ENCODE measurements at regions of chr16 and their contacts with region 1.

Region 1: DNA sequence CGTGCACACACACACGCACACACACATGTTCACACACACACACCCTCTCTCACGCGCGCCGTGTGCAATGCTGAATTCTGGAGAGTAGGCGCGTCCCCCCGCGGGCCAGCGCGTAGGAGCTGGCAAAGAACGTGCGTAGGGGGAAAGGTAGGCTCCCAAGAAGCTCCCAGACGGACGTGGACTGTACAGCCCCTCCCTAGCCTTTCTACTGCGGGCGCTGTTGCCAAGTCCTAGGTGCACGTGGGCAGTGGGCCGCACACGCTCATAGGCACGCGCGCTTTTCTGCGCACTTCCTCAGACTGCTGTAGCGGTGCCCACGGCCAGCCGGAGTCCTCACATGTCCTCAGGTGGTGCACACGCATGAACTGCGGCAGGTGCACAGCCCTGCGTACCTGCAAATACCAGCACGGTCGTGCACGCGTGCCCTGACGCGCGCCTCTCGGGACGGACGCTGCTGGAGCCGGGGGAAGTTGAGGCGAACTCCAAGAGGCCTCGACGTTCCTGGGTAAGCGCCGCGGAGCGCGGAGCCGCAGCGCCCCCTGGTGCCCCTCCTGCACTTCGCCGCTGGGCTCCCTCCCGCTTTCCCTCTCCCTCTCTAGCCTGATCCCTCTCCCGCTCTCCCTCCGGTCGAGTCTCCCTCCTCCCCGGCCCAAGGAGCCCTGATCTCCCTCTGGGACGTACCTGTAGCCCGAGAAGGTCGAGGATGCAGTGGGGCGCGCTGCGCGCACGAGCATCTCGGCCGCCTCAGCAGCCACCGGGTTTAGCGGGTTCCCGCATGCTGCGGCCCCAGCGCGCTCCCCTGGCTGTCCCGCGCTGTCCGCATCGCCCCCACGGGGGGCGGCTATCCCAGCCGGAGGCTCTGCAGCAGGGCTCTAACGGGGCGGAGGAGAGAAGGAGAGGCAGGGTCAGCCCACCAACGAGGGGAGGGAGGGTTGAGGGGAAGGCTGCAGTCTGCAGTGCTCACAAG is 749 bp downstream of the GRIN2A start:
- DNase-seq: no peak
- ATAC-seq: peak; percentile 83
- H3K4me3 ChIP-seq: peak overlapping the region; percentile 55; the same call in 1 of the 2 replicates
- H3K27ac ChIP-seq: no peak overlapping the region
- H3K4me1 ChIP-seq: peaks cover 3% of the 10 kb centered on the region; the same call in 1 of the 2 replicates
- H3K27me3 ChIP-seq: peaks cover 3 to 6% of the 10 kb centered on the region in 2 experiments; a peak in 3 of 4 replicates
- CTCF ChIP-seq: peak; percentile 76 to 97 (median 91)
- EP300 ChIP-seq: no peak
- POLR2A ChIP-seq: no peak
- RAD21 ChIP-seq: peak; percentile 82

Region 2: GRCh38 chr16:8572919-8573724 is 1608.4 kb before region 1 on chr16:
- CTCF ChIA-PET with region 1: no interaction called
- POLR2A ChIA-PET with region 1: no interaction called
- RAD21 ChIA-PET with region 1: no interaction called
- SMC1A ChIA-PET with region 1: no interaction called
- in situ Hi-C with region 1: loop called (anchors 10 kb)
- intact Hi-C with region 1: no loop called
- DNase-seq: no peak
- ATAC-seq: peak; percentile 56
- H3K4me3 ChIP-seq: no peak overlapping the region
- H3K27ac ChIP-seq: no peak overlapping the region
- H3K4me1 ChIP-seq: no peaks in the 10 kb centered on the region
- H3K27me3 ChIP-seq: no peaks in the 10 kb centered on the region; a peak in 2 of 4 replicates
- CTCF ChIP-seq: peak; percentile 39 to 64 (median 54); a peak in 5 of 6 replicates
- EP300 ChIP-seq: no peak
- POLR2A ChIP-seq: no peak
- RAD21 ChIP-seq: peak; percentile 86

Region 3: DNA sequence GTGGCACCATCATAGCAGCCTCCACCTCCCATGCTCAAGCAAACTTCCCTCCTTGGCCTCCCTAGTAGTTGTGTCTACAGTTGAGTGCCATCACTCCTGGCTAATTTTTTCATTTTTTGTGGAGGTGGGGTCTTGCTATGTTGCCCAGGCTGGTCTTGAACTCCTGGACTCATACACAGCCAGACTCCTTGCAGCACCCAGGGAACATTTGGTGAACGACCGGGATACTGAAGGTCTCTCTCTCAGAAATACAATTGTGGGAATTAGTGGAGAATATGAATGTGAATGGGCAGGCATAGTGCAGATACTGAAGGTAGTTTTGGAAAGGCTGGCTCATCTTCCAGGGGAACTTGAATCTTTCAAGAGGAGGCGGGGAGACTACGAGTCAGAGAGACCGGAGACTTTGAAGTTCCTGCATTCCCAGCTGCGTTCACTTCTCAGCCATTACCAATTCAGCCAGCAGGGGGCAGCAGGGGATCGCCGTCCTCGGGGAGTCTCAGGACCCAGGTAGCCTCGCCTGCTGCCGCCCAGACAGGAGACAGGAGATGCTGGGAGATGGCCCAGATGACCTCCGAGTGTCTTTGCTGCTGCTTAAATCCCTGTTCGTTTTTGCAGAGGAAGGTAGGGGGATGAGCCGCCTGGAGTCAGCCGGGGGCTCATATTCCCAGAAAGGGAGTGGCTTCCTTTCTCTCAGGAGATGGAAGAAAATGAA is 1021.5 kb before region 1 on chr16:
- CTCF ChIA-PET with region 1: no interaction called
- POLR2A ChIA-PET with region 1: no interaction called
- RAD21 ChIA-PET with region 1: no interaction called
- SMC1A ChIA-PET with region 1: no interaction called
- in situ Hi-C with region 1: no loop called
- intact Hi-C with region 1: loop called (anchors 1 kb)
- DNase-seq: peak; percentile 4
- ATAC-seq: peak; percentile 91
- H3K4me3 ChIP-seq: no peak overlapping the region
- H3K27ac ChIP-seq: no peak overlapping the region
- H3K4me1 ChIP-seq: no peaks in the 10 kb centered on the region
- H3K27me3 ChIP-seq: no peaks in the 10 kb centered on the region; a peak in 1 of 4 replicates
- CTCF ChIP-seq: peak; percentile 73 to 81 (median 79)
- EP300 ChIP-seq: no peak
- POLR2A ChIP-seq: no peak
- RAD21 ChIP-seq: peak; percentile 80

Region 4: DNA sequence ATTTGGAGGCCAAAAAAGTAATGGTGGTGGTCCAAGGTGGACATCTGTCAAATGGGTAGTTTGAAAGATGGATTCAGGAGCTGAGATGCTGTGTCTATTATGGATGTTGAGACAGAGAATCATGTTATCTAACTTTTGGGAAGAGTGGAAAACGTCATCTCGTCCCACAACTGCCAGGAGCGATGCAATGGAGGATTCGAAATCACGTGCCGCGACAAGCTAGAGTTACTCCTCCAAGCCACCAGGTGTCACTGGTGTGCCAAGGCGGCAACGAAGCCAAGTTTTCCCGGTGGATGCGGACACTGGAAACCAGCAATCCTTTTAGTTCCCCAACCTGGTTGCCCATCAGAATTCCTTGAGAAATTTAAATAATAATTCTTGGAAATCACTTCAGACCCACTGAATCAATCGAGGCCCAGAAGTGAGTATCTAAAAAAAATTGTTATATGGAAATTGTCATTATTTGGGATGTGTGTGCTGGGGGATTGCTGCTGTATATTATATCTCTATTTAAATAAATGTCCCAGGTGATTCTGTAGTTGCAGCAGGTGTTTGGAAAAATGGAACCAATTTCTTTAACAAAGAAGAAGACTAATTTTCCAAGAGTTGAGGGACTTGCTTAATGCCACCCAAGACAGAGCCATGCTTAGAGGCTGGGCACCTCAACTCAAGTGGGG is 883.9 kb before region 1 on chr16:
- CTCF ChIA-PET with region 1: interaction called, 10 read pairs
- POLR2A ChIA-PET with region 1: no interaction called
- RAD21 ChIA-PET with region 1: interaction called, 3 read pairs
- SMC1A ChIA-PET with region 1: no interaction called
- in situ Hi-C with region 1: no loop called
- intact Hi-C with region 1: loop called (anchors 2 kb)
- DNase-seq: no peak
- ATAC-seq: no peak
- H3K4me3 ChIP-seq: no peak overlapping the region
- H3K27ac ChIP-seq: no peak overlapping the region
- H3K4me1 ChIP-seq: no peaks in the 10 kb centered on the region
- H3K27me3 ChIP-seq: no peaks in the 10 kb centered on the region
- CTCF ChIP-seq: peak; percentile 40 to 57 (median 42); a peak in 4 of 6 replicates
- EP300 ChIP-seq: no peak
- POLR2A ChIP-seq: no peak
- RAD21 ChIP-seq: peak; percentile 57

Region 5: DNA sequence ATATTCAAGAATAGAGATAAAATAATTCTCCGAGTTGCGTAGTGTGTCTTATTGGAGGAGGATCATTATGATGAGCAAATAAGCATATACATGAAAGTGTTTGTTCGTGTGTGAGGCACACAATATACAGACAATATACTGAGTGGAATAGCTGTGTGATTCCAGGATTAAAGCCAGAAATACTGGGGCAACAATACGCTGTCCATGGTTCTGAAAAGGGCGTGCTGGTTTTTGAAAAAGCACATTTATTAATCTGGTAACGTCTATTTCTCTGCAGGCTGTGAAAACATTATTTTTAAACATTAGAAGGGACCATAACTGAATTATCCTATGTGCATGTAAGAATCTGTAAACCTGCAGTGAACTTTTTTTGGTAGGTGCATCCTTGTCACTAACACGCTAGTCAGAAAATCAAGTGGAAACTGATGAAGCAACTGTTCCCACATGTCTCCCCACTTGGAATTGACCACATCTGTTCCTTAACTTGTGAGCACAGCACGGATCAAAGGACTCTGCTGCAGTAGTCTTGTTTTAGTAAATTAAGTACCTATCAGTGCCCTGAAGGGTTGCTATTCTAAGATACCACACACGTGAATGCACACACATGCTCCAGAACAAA is 345.3 kb before region 1 on chr16:
- CTCF ChIA-PET with region 1: no interaction called
- POLR2A ChIA-PET with region 1: no interaction called
- RAD21 ChIA-PET with region 1: interaction called, 3 read pairs
- SMC1A ChIA-PET with region 1: no interaction called
- in situ Hi-C with region 1: no loop called
- intact Hi-C with region 1: loop called (anchors 5 kb)
- DNase-seq: no peak
- ATAC-seq: no peak
- H3K4me3 ChIP-seq: no peak overlapping the region
- H3K27ac ChIP-seq: no peak overlapping the region
- H3K4me1 ChIP-seq: peaks cover 4% of the 10 kb centered on the region; the same call in 1 of the 2 replicates
- H3K27me3 ChIP-seq: no peaks in the 10 kb centered on the region
- CTCF ChIP-seq: no peak
- EP300 ChIP-seq: no peak
- POLR2A ChIP-seq: no peak
- RAD21 ChIP-seq: no peak

Region 6: DNA sequence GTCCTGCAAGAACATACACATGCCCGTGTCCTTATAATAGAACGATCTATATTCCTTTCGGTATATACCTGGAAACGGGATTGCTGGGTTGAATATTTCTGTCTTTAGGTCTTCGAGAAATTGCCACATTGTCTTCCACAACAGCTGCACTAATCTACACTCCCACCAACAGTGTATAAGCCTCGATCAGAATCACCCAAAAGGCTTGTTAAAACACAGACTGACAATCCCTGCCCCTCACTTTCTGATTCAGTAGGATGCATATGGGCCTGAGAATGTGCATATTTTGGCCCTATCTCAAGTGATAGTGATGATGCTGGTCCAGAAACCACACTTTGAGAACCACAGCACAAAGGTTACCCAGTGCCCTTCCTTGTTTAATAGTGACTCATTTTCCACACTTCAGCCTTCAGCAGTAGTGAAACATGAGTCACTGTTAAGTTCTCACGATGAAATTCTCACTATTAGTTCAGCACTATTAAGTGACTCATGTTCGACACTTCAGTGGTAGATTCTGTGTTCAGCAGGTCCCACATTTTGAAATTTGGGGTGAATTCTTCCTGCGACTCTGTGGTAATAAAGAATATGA is 214.8 kb before region 1 on chr16:
- CTCF ChIA-PET with region 1: interaction called, 28 read pairs
- POLR2A ChIA-PET with region 1: no interaction called
- RAD21 ChIA-PET with region 1: interaction called, 9 read pairs
- SMC1A ChIA-PET with region 1: interaction called, 20 read pairs
- in situ Hi-C with region 1: no loop called
- intact Hi-C with region 1: loop called (anchors 5 kb)
- DNase-seq: peak; percentile 86
- ATAC-seq: peak; percentile 92
- H3K4me3 ChIP-seq: no peak overlapping the region
- H3K27ac ChIP-seq: no peak overlapping the region
- H3K4me1 ChIP-seq: peaks cover 3% of the 10 kb centered on the region
- H3K27me3 ChIP-seq: no peaks in the 10 kb centered on the region
- CTCF ChIP-seq: no peak
- EP300 ChIP-seq: peak; percentile 73 to 81; a peak in 2 of 4 replicates
- POLR2A ChIP-seq: no peak
- RAD21 ChIP-seq: no peak

Region 7: DNA sequence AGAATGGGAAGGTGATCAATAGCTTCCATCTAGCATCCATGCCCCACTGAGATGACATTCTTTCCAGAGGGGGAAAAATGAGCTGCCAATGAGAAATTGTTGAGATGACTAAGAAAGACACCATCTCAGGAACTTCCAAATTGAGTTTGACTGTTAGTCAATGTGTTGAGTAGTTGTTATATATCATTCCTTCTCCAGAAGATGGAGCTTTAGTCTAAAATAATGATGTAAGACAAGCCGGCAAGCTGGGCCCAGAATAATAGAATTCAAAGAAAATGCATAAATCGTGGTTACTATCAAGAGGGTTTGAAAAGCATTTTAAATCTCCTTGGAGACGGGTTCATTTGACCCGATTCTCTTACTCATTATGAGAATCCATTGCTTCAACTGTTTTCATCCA is 133.3 kb after region 1 on chr16:
- CTCF ChIA-PET with region 1: no interaction called
- POLR2A ChIA-PET with region 1: no interaction called
- RAD21 ChIA-PET with region 1: interaction called, 4 read pairs
- SMC1A ChIA-PET with region 1: interaction called, 11 read pairs
- in situ Hi-C with region 1: no loop called
- intact Hi-C with region 1: no loop called
- DNase-seq: no peak
- ATAC-seq: peak; percentile 9; the same call in 1 of the 3 replicates
- H3K4me3 ChIP-seq: no peak overlapping the region
- H3K27ac ChIP-seq: no peak overlapping the region
- H3K4me1 ChIP-seq: peaks cover 13% of the 10 kb centered on the region
- H3K27me3 ChIP-seq: no peaks in the 10 kb centered on the region
- CTCF ChIP-seq: peak; percentile 9 to 52 (median 29); a peak in 4 of 6 replicates
- EP300 ChIP-seq: no peak
- POLR2A ChIP-seq: no peak
- RAD21 ChIP-seq: peak; percentile 63

Region 8: GRCh38 chr16:10577305-10578202 is 396.1 kb after region 1 on chr16:
- CTCF ChIA-PET with region 1: no interaction called
- POLR2A ChIA-PET with region 1: no interaction called
- RAD21 ChIA-PET with region 1: no interaction called
- SMC1A ChIA-PET with region 1: no interaction called
- in situ Hi-C with region 1: no loop called
- intact Hi-C with region 1: no loop called
- DNase-seq: no peak
- ATAC-seq: no peak
- H3K4me3 ChIP-seq: no peak overlapping the region
- H3K27ac ChIP-seq: no peak overlapping the region
- H3K4me1 ChIP-seq: no peaks in the 10 kb centered on the region; the same call in 1 of the 2 replicates
- H3K27me3 ChIP-seq: peaks cover 8 to 16% of the 10 kb centered on the region in 2 experiments
- CTCF ChIP-seq: no peak
- EP300 ChIP-seq: no peak
- POLR2A ChIP-seq: no peak
- RAD21 ChIP-seq: no peak